GM13976 (cell line): ENCODE measurements at regions of chr6 and their contacts with region 1.

Region 1: DNA sequence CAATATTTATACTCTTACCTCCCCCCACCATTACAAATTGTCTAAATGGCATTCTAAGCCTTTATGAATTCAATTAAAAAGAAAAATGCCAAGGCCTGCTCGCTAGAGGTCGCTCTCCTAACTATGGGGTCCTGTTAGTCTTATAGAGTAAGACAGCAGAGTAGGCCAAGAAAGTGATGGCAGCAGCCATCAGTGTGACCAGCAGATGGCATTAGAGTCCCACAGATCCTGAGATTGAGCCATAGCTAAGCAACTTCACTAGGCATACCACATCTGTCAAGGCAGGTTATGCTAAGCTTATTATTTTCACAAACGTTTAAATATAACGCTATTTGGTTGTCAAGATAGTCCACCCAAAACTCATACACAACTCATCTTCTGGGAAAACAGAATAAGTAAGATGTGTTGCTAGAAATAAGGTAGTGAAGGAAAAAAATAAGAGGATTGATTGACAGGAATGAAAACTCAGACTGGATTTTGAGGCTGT is 57.6 kb upstream of the SCAF8 start:
- DNase-seq: peak; percentile 88
- CTCF ChIP-seq: peak; percentile 98

Region 2: DNA sequence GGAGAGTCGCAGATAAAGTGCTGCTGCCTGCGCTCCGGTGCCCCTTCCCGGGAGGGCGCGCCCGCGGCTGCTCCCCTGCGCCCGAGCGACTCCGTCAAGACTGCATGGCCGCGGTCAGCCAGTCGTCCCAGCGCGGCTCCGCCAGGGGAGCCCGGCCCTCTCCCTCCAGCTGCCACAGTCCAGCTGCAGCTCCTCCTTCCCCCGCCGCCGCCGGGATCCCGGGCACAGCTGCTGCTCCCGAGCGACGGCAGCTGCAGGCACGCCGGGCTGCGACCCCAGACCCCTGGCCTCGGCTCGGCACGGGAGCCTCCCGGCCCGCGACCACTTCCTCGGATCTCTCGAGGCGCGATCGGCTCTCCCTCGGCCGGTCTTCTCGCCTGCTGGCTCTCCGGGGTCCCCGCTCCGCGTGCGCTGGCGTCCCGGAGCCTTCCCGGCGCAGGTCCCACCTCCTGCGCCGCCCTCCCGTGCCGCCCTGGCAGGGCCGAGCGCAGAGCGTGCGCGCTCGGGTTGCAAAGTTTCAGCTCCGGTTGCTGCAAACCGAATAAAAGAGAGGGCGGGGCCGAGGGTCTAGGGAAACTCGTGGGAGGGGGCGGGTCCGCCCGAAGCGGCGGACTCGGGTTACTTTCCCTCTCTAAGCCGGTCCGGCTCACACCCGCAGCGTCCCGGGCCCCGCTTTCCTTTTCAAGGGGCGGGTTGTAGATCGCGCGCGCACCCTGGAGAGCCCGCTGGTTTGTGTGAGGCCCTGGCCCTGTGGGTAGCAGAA is 165.3 kb before region 1 on chr6 and contains the start of gene CNKSR3:
- in situ Hi-C with region 1: no loop called
- DNase-seq: peak; percentile 65
- CTCF ChIP-seq: no peak

Region 3: GRCh38 chr6:154805288-154805911 is 129.8 kb after region 1 on chr6:
- in situ Hi-C with region 1: loop called (anchors 10 kb)
- DNase-seq: peak; percentile 31
- CTCF ChIP-seq: no peak

Region 4: GRCh38 chr6:154921482-154921881 is 245.8 kb after region 1 on chr6:
- in situ Hi-C with region 1: loop called (anchors 25 kb)
- DNase-seq: no peak
- CTCF ChIP-seq: no peak